Heart left ventricle (tissue), 16 donors: ENCODE measurements at regions of chr2 and their contacts with region 1.

Region 1: GRCh38 chr2:16773080-16773713 is 107.6 kb upstream of the CYRIA start:
- DNase-seq: peak in 1 of 5 donors; percentile 12
- ATAC-seq: peak in 3 of 4 donors; percentile 62 to 80 (median 77)
- H3K4me3 ChIP-seq: no peak overlapping the region
- H3K27ac ChIP-seq: no peak overlapping the region
- H3K4me1 ChIP-seq: no peaks in the 10 kb centered on the region
- H3K27me3 ChIP-seq: peaks cover 0 to 10% (median 0%) of the 10 kb centered on the region in 9 donors
- CTCF ChIP-seq: peak; percentile 15 to 64 (median 54)
- POLR2A ChIP-seq: no peak

Region 2: GRCh38 chr2:17148407-17149145 is 375.4 kb after region 1 on chr2:
- intact Hi-C with region 1: loop called in 1 of 10 experiments (anchors 5 kb)
- DNase-seq: no peak
- ATAC-seq: no peak
- H3K4me3 ChIP-seq: no peak overlapping the region
- H3K27ac ChIP-seq: no peak overlapping the region
- H3K4me1 ChIP-seq: no peaks in the 10 kb centered on the region
- H3K27me3 ChIP-seq: no peaks in the 10 kb centered on the region
- CTCF ChIP-seq: peak in 6 of 12 donors; percentile 9 to 22 (median 11)
- POLR2A ChIP-seq: no peak

Region 3: GRCh38 chr2:17309741-17310339 is 536.6 kb after region 1 on chr2:
- intact Hi-C with region 1: loop called (anchors 2 to 10 kb)
- DNase-seq: peak in 1 of 5 donors; percentile 11
- ATAC-seq: peak in 3 of 4 donors; percentile 30 to 72 (median 45)
- H3K4me3 ChIP-seq: no peak overlapping the region
- H3K27ac ChIP-seq: no peak overlapping the region
- H3K4me1 ChIP-seq: no peaks in the 10 kb centered on the region
- H3K27me3 ChIP-seq: no peaks in the 10 kb centered on the region
- CTCF ChIP-seq: peak; percentile 44 to 72 (median 61)
- POLR2A ChIP-seq: no peak

Region 4: DNA sequence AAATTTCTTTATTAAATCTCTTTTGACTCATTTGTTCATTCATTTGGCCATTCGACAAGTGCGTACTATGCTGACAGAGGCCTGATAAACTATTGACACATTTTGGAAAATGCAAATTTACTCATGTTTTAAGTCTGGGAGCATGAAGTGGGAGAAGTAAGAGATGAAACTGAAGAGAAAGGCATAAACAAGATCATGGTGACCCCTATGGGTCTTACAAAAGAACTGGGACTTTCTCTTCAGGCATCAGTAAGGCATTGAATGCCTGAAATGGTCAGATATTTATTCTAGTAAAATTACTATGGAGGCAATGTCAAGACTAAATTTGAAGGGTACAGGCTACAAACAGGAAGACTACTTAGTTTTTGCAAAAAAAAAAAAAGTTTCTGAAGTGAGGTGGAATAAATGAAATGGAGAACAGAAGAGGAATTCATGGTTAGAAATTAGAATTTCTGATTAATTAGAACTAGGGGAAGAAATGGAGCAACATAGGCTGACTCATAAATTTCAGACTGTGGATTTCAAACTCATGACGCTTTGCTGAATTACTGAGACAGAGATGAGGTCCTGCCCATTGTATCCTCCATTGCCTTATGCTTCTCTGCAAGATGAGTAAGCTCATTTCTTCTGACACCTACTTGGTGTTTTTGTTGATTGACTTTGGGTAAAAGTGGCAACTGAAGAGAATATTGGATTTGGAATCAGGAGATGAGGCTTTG is 800.0 kb after region 1 on chr2:
- intact Hi-C with region 1: loop called in 1 of 10 experiments (anchors 5 kb)
- DNase-seq: no peak
- ATAC-seq: no peak
- H3K4me3 ChIP-seq: no peak overlapping the region
- H3K27ac ChIP-seq: no peak overlapping the region
- H3K4me1 ChIP-seq: peaks cover 0 to 3% (median 0%) of the 10 kb centered on the region in 12 donors
- H3K27me3 ChIP-seq: no peaks in the 10 kb centered on the region
- CTCF ChIP-seq: peak in 4 of 12 donors; percentile 13 to 35 (median 22)
- POLR2A ChIP-seq: no peak